ENCODE measurements at regions of chr10 and their contacts with region 1.

Region 1: GRCh38 chr10:24724381-24725228 is 918 bp upstream of the ARHGAP21 start:
- DNase-seq: peak; percentile 97 to 98 (median 97)
- H3K4me3 ChIP-seq: peak overlapping the region; percentile 65
- H3K27ac ChIP-seq: peak overlapping the region; percentile 94 to 98
- H3K4me1 ChIP-seq: no peaks in the 10 kb centered on the region
- H3K27me3 ChIP-seq: no peaks in the 10 kb centered on the region
- CTCF ChIP-seq: peak in 1 of 3 donors; percentile 9
- EP300 ChIP-seq: no peak
- POLR2A ChIP-seq: peak; percentile 86

Region 2: GRCh38 chr10:24952707-24953645 is 228.4 kb after region 1 on chr10:
- intact Hi-C with region 1: loop called in 3 of 4 experiments (anchors 5 to 10 kb)
- DNase-seq: peak; percentile 52 to 67 (median 64)
- H3K4me3 ChIP-seq: peak overlapping the region; percentile 67
- H3K27ac ChIP-seq: peak overlapping the region; percentile 89 to 95
- H3K4me1 ChIP-seq: peaks cover 3% of the 10 kb centered on the region
- H3K27me3 ChIP-seq: no peaks in the 10 kb centered on the region
- CTCF ChIP-seq: peak in 2 of 3 donors; percentile 30 to 50
- EP300 ChIP-seq: no peak
- POLR2A ChIP-seq: peak; percentile 21

Measured in ovary (tissue), 10 donors.